ENCODE measurements at regions of chr16 and their contacts with region 1.

Region 1: GRCh38 chr16:50747207-50747956 is 5.5 kb downstream of the CYLD start:
- DNase-seq: peak; percentile 60
- ATAC-seq: peak; percentile 61
- H3K4me3 ChIP-seq: no peak overlapping the region
- H3K4me3 Mint-ChIP-seq: peak overlapping the region; percentile 74
- H3K27ac ChIP-seq: peak overlapping the region in 1 of 2 donors; percentile 58
- H3K27ac Mint-ChIP-seq: peak overlapping the region; percentile 59
- H3K4me1 ChIP-seq: peaks cover 33 to 39% of the 10 kb centered on the region in 2 donors
- H3K4me1 Mint-ChIP-seq: peaks cover 55% of the 10 kb centered on the region
- H3K27me3 ChIP-seq: no peaks in the 10 kb centered on the region
- H3K27me3 Mint-ChIP-seq: no peaks in the 10 kb centered on the region
- CTCF ChIP-seq: peak; percentile 74

Region 2: GRCh38 chr16:50368410-50369132 is 378.8 kb before region 1 on chr16 and contains the start of gene BRD7:
- CTCF ChIA-PET with region 1: interaction called, 3 read pairs
- POLR2A ChIA-PET with region 1: no interaction called
- intact Hi-C with region 1: loop called (anchors 2 kb)
- DNase-seq: peak; percentile 85
- ATAC-seq: peak; percentile 95
- H3K4me3 ChIP-seq: peak within 1 kb of the TSS; percentile 45 to 82 (median 66)
- H3K4me3 Mint-ChIP-seq: peak within 1 kb of the TSS; percentile 91
- H3K27ac ChIP-seq: peak within 1 kb of the TSS; percentile 57 to 88
- H3K27ac Mint-ChIP-seq: peak within 1 kb of the TSS; percentile 88
- H3K4me1 ChIP-seq: peaks cover 26 to 32% of the 10 kb centered on the region in 2 donors
- H3K4me1 Mint-ChIP-seq: peaks cover 41% of the 10 kb centered on the region
- H3K27me3 ChIP-seq: no peaks in the 10 kb centered on the region
- H3K27me3 Mint-ChIP-seq: peaks cover 4% of the 10 kb centered on the region
- CTCF ChIP-seq: peak; percentile 56
- total RNA-seq, gene BRD7: 64.5 and 69.7 TPM in 2 replicates

Region 3: GRCh38 chr16:50588276-50588675 is 159.1 kb before region 1 on chr16:
- CTCF ChIA-PET with region 1: no interaction called
- POLR2A ChIA-PET with region 1: no interaction called
- intact Hi-C with region 1: loop called (anchors 2 kb)
- DNase-seq: peak; percentile 12
- ATAC-seq: no peak
- H3K4me3 ChIP-seq: no peak overlapping the region
- H3K4me3 Mint-ChIP-seq: no peak overlapping the region
- H3K27ac ChIP-seq: peak overlapping the region; percentile 68 to 90
- H3K27ac Mint-ChIP-seq: peak overlapping the region; percentile 94
- H3K4me1 ChIP-seq: peaks cover 15 to 30% of the 10 kb centered on the region in 2 donors
- H3K4me1 Mint-ChIP-seq: peaks cover 17% of the 10 kb centered on the region
- H3K27me3 ChIP-seq: no peaks in the 10 kb centered on the region
- H3K27me3 Mint-ChIP-seq: no peaks in the 10 kb centered on the region
- CTCF ChIP-seq: no peak

Region 4: GRCh38 chr16:50657241-50657640 is 90.1 kb before region 1 on chr16:
- CTCF ChIA-PET with region 1: no interaction called
- POLR2A ChIA-PET with region 1: no interaction called
- intact Hi-C with region 1: no loop called
- DNase-seq: no peak
- ATAC-seq: no peak
- H3K4me3 ChIP-seq: no peak overlapping the region
- H3K4me3 Mint-ChIP-seq: no peak overlapping the region
- H3K27ac ChIP-seq: no peak overlapping the region
- H3K27ac Mint-ChIP-seq: no peak overlapping the region
- H3K4me1 ChIP-seq: no peaks in the 10 kb centered on the region
- H3K4me1 Mint-ChIP-seq: no peaks in the 10 kb centered on the region
- H3K27me3 ChIP-seq: no peaks in the 10 kb centered on the region
- H3K27me3 Mint-ChIP-seq: no peaks in the 10 kb centered on the region
- CTCF ChIP-seq: no peak

Region 5: DNA sequence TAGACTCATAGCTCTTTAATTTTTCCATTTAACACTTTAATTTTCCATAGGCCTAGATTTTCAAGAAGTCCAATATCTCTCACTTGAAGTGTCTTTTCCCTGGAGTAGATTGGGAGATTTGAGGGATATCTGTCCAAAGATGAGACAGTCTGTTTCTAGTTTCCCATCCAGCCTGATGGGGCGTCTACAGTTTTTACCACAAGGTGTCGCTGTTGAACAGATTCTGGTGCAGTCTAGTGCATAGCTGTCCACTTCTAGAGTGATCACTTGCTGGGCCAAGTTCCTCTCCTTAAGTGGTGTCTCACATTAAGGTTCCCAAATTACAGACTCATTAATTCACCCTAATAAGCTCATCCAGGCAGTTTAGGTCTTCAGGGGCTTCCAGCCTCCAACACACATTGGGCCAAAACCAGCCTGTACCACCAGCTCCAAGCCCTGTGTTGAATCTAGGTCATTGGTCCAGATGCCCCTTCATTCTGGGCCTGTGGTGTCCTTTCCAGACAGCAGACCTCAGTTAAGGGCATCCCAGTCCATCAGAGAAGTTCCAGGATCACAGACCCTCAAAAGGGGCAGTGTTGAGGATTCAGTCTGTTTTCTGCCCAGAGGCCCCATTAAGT is 75.6 kb before region 1 on chr16:
- CTCF ChIA-PET with region 1: interaction called, 120 read pairs
- POLR2A ChIA-PET with region 1: interaction called, 4 read pairs
- intact Hi-C with region 1: loop called (anchors 2 kb)
- DNase-seq: peak; percentile 62
- ATAC-seq: peak; percentile 44
- H3K4me3 ChIP-seq: no peak overlapping the region
- H3K4me3 Mint-ChIP-seq: no peak overlapping the region
- H3K27ac ChIP-seq: no peak overlapping the region
- H3K27ac Mint-ChIP-seq: no peak overlapping the region
- H3K4me1 ChIP-seq: peaks cover 7% of the 10 kb centered on the region in 2 donors
- H3K4me1 Mint-ChIP-seq: peaks cover 16% of the 10 kb centered on the region
- H3K27me3 ChIP-seq: no peaks in the 10 kb centered on the region
- H3K27me3 Mint-ChIP-seq: no peaks in the 10 kb centered on the region
- CTCF ChIP-seq: peak; percentile 73

Region 6: DNA sequence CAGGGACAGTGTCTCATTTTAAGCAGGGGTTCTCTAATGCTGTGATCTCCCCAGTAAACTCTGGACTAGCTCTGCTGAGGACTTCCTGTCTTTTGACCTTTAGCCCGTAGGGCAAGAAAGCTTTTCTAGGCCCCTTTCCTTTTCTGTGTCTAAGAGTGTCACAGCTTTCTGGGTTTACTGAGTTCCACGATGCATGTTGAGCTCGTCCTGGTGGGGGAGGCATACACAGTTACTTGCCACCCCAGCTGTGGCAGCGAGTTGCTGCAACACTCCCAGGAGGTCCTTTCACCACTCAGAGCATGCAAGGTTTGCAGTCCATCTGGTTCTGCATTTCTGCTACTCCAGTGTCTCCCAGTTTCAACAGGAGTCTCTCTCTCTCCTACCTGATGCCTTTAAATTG is 30.3 kb before region 1 on chr16:
- CTCF ChIA-PET with region 1: no interaction called
- POLR2A ChIA-PET with region 1: interaction called, 15 read pairs
- intact Hi-C with region 1: no loop called
- DNase-seq: no peak
- ATAC-seq: no peak
- H3K4me3 ChIP-seq: no peak overlapping the region
- H3K4me3 Mint-ChIP-seq: no peak overlapping the region
- H3K27ac ChIP-seq: no peak overlapping the region
- H3K27ac Mint-ChIP-seq: no peak overlapping the region
- H3K4me1 ChIP-seq: peaks cover 0 to 4% of the 10 kb centered on the region in 2 donors
- H3K4me1 Mint-ChIP-seq: peaks cover 2% of the 10 kb centered on the region
- H3K27me3 ChIP-seq: no peaks in the 10 kb centered on the region
- H3K27me3 Mint-ChIP-seq: no peaks in the 10 kb centered on the region
- CTCF ChIP-seq: no peak

Region 7: GRCh38 chr16:50789757-50790156 is 42.4 kb after region 1 on chr16:
- CTCF ChIA-PET with region 1: no interaction called
- POLR2A ChIA-PET with region 1: no interaction called
- intact Hi-C with region 1: loop called (anchors 5 kb)
- DNase-seq: no peak
- ATAC-seq: no peak
- H3K4me3 ChIP-seq: no peak overlapping the region
- H3K4me3 Mint-ChIP-seq: no peak overlapping the region
- H3K27ac ChIP-seq: no peak overlapping the region
- H3K27ac Mint-ChIP-seq: no peak overlapping the region
- H3K4me1 ChIP-seq: no peaks in the 10 kb centered on the region
- H3K4me1 Mint-ChIP-seq: no peaks in the 10 kb centered on the region
- H3K27me3 ChIP-seq: no peaks in the 10 kb centered on the region
- H3K27me3 Mint-ChIP-seq: no peaks in the 10 kb centered on the region
- CTCF ChIP-seq: no peak

Measured in B cell (primary cell).